HEK293T (cell line): ENCODE measurements at regions of chr17 and their contacts with region 1.

Region 1: GRCh38 chr17:42135664-42136653 is 13.4 kb downstream of the HSPB9 start:
- DNase-seq: no peak

Region 2: GRCh38 chr17:42026857-42027589 is 108.9 kb before region 1 on chr17:
- CTCF ChIA-PET with region 1: no interaction called
- POLR2A ChIA-PET with region 1: no interaction called
- DNase-seq: no peak

Region 3: DNA sequence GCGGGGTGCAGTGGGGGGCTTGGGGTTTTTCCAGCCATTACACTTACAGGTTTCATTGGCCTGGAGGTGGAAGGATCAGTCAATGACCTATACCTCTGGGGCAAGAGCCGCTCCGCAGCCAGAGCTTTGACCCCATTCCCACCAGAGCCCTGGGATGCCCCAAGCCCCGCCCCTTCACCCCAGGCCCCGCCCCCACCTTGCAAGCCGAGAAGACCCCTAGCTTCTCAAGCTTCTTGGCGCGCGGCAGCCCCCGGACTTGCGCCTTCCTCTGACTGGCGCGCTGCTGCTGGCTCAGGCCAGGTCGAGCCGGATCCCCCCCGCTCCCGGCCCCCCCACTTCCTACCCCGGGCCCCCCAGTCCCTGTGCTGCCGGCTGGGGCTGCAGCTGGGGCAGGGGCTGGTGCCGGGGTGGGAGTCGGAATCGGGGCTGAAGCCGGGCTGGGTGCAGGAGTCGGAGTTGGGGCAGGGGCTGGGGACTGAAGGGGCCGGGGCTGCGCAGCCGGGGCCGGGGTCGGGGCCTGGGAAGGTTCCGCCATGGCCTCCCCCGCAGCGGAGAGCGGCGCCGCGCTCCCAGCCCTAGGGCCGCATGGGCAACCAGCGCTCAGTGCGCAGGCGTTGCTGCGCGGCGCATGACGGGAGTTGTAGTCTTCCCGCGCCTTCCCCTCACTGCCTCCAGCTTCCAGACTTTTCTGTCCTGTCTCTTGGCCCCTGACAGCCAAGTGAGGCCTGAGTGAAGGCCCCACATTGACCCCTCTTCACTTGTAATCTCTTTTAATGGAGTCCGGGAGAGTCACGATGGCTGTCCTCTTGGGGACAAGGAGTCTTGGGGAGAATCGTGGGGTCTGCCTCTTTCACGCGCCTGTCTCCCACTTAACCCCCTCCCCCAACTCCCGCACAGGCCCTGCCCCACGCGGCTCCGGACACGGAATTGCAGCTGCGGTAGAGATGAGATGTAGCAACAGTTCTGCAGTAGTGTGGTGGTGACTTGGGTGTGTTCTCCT is 14.9 kb before region 1 on chr17 and contains the start of gene KAT2A:
- CTCF ChIA-PET with region 1: no interaction called
- POLR2A ChIA-PET with region 1: interaction called, 25 read pairs
- DNase-seq: peak; percentile 94